ENCODE measurements at regions of chr4 and their contacts with region 1.

Region 1: DNA sequence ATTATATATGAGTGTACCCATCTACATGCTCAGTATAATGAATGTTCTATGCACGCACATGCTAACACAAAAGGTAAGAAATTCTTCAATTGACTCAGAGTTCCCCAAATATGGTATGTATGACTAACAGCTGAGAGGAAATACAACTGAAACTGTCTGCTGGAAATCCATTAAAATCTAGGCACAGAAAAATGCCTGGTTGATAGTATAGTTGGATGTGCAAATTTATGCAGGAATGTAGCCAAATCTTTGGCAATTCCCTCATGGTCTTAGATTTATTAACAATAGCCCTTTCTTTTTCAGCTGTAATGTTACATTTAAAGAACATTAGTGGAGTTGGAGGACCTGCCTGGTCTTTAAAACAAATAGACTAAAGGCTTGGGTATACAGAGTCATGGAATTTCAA is 5.5 kb downstream of the CAMK2D start:
- DNase-seq: no peak
- H3K4me3 ChIP-seq: no peak overlapping the region
- H3K27ac ChIP-seq: peak overlapping the region in 1 of 2 donors; percentile 49
- H3K4me1 ChIP-seq: peaks cover 0 to 27% of the 10 kb centered on the region in 2 donors
- H3K27me3 ChIP-seq: no peaks in the 10 kb centered on the region
- CTCF ChIP-seq: no peak

Region 2: GRCh38 chr4:113741956-113742355 is 14.1 kb before region 1 on chr4:
- intact Hi-C with region 1: loop called (anchors 2 kb)
- DNase-seq: no peak
- H3K4me3 ChIP-seq: no peak overlapping the region
- H3K27ac ChIP-seq: peak overlapping the region; percentile 43 to 44
- H3K4me1 ChIP-seq: peaks cover 5 to 16% of the 10 kb centered on the region in 2 donors
- H3K27me3 ChIP-seq: no peaks in the 10 kb centered on the region
- CTCF ChIP-seq: no peak

Region 3: DNA sequence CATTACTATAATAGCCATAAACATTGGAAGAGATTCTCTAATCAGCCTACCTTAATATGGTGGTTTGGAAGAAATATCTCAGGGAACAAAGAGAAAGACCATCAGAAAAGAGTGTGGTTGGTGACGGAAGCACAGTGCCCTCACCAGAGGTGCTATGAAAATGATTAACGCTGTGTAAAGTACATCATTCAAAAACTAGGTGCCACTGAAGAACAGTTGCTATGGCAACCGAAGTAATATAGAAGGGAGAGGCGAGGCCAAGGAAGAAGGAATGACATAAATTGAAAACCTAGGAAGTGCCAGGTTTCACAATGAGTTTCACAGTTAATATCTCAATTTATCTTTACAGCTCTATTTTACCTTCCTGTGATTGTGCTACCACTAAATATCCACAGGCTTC is 280.4 kb after region 1 on chr4:
- intact Hi-C with region 1: no loop called
- DNase-seq: no peak
- H3K4me3 ChIP-seq: no peak overlapping the region
- H3K27ac ChIP-seq: no peak overlapping the region
- H3K4me1 ChIP-seq: no peaks in the 10 kb centered on the region
- H3K27me3 ChIP-seq: no peaks in the 10 kb centered on the region
- CTCF ChIP-seq: no peak

Measured in ascending aorta (tissue), 2 donors.